PC-9 (cell line): ENCODE measurements at regions of chr2 and their contacts with region 1.

Region 1: DNA sequence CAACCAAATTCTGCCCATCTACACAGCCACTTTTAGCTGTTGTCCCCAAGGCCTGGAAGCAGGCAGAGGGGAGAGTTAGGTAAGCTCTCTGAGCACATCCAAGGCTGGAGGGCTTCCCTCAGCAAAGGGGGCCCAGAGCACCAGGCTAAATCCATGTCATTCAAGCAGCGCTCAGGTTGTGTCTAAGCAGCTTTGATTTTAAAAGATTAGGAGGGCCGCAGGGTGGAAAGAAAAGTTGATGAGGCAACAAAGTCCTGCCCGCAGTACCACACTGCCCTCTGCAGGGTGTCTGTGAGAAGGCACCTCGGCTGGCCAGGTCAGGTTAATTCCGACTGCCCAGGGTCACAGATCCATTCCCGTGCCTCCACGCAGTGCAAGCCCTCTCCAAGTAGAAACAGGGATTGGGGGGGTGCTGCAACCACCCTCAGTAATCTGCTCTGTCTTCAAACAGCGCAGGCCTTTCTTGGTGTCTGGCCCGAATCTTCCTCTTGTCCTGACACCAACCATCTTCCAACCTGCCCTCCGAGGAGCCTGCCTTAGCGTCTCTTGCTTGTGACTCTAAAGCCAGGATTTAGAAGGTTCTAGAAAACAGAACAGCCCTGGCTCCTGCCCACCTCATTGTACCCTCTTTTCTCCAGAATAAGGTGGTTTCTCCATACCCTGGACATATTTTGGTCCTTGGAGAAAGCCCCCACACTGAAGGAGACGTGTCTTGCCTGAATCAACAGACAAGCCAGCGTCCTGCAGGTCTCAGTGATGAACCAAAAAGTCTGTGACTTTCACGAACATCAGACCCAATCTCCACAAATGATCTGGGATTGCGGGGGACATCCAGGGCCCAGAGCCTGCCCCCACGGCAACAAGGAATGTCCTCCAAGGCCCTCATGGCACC is 289.2 kb downstream of the TNS1 start:
- DNase-seq: peak; percentile 36 to 84
- H3K4me3 ChIP-seq: no peak overlapping the region
- H3K27ac ChIP-seq: no peak overlapping the region
- H3K4me1 ChIP-seq: peaks cover 26% of the 10 kb centered on the region
- H3K27me3 ChIP-seq: no peaks in the 10 kb centered on the region
- CTCF ChIP-seq: peak; percentile 95

Region 2: DNA sequence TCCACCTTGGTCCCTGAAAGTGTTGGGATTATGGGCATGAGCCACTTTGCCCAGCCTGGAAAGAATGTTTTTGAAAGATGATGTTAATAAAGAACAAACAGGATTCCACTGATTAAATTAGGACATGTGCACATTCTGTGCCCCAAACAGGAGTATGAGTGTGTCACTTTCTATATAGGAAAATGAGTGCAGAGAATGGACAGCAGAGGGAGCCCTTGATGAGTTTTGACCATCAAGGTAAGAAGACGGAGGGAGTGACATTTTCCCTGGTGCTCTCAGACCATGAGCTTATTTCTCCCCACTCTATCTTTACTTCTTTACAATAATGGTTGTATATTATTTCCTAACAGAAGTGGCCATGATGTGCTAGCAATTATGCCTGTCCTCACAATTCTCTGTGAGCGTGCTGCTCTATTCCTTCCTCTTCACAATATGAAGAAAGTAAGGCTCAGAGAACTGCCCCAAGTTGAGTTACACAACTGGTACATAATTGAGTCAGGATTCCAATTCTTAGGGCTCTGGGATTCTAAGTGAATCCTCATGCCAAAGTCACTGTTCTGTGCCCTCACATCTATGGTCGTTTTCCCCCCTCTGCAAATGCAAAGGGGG is 1194.4 kb before region 1 on chr2:
- CTCF ChIA-PET with region 1: no interaction called
- POLR2A ChIA-PET with region 1: no interaction called
- intact Hi-C with region 1: loop called (anchors 1 kb)
- DNase-seq: peak; percentile 53 to 64
- H3K4me3 ChIP-seq: no peak overlapping the region
- H3K27ac ChIP-seq: no peak overlapping the region
- H3K4me1 ChIP-seq: 0 out of 2 replicates have a peak, but pooled peaks cover 3% of the 10 kb centered on the region
- H3K27me3 ChIP-seq: no peaks in the 10 kb centered on the region
- CTCF ChIP-seq: peak; percentile 86

Region 3: GRCh38 chr2:216681683-216682082 is 1032.0 kb before region 1 on chr2:
- CTCF ChIA-PET with region 1: no interaction called
- POLR2A ChIA-PET with region 1: no interaction called
- intact Hi-C with region 1: loop called (anchors 1 kb)
- DNase-seq: no peak
- H3K4me3 ChIP-seq: no peak overlapping the region
- H3K27ac ChIP-seq: 0 out of 2 replicates have a peak overlapping the region, but pooled peaks have one; percentile 10
- H3K4me1 ChIP-seq: peaks cover 17% of the 10 kb centered on the region
- H3K27me3 ChIP-seq: no peaks in the 10 kb centered on the region
- CTCF ChIP-seq: no peak

Region 4: DNA sequence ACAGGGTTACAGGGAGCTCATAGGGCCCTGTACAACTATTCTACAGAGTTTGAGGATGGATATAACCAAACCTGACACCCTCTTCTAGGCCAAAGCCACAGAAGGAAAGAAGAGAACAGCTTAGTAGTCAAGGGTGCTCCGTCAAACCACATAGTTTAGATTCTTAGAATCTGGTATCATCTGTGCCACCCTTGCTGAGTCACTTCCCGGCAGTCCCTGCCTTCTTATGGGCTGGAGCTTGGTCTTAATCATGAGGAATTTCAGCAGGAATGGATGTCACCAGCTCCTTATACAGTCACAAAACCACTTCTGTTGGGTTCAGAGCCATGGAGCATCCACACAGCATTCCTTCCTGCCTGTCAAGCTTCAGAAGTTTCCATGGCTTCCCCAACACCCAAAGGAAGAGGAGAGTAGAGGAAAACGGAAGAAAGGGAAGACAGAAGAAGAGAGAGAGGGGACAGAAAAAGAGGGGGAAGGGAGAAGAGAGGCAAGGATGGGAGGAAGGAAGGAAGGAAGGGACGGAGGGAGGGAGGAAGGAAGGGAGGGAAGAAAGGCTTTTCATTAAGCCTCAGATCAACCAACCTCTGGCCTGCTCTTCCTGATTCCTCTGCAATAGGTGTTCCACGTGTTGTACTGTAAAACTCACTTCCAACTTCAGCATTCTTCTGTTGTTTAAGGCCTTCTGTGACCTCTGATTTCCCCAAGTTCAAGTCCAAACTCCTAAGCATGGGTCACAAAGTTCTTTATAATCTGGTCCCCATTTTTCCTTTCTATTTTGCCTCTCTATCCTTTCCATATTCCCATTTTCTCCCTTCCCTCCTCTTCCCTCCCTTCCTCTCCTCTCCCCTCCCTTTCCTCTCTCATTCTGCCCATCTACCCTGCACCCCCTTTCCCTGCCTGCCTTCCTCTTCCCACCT is 607.6 kb before region 1 on chr2:
- CTCF ChIA-PET with region 1: interaction called, 10 read pairs
- POLR2A ChIA-PET with region 1: no interaction called
- intact Hi-C with region 1: no loop called
- DNase-seq: peak; percentile 79 to 95
- H3K4me3 ChIP-seq: no peak overlapping the region
- H3K27ac ChIP-seq: peak overlapping the region; percentile 94
- H3K4me1 ChIP-seq: peaks cover 61% of the 10 kb centered on the region
- H3K27me3 ChIP-seq: no peaks in the 10 kb centered on the region
- CTCF ChIP-seq: no peak

Region 5: DNA sequence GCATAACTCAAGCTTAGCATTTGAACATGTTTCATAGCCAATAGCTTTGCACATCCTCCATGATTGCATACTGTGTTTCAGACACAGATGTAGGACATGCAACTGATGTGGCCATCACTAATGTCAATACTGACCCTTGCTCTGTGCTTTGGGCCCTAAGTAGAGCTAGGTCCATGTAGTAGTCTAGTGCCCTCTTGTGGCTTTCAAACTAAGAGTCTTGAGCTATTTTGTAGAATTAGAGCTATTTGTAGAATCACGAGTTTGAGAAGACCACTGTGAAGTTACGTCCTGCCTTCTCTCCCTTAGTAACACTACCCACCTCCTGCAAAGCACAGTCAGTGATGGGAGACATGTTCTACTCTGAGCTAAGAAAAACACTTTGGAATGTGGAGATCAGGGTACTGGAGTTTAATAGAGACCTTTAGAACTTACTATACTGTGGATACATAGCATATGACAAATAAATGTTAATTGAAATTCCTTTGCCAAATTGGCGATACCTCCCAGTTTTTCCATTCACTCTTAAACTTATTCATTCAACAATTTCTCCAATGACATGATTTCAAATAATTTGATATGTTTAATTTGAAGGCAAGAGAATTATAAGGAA is 547.3 kb before region 1 on chr2:
- CTCF ChIA-PET with region 1: interaction called, 11 read pairs
- POLR2A ChIA-PET with region 1: no interaction called
- intact Hi-C with region 1: loop called (anchors 10 kb)
- DNase-seq: peak in 1 of 2 experiments; percentile 4
- H3K4me3 ChIP-seq: no peak overlapping the region
- H3K27ac ChIP-seq: no peak overlapping the region
- H3K4me1 ChIP-seq: peaks cover 14% of the 10 kb centered on the region; the same call in 1 of the 2 replicates
- H3K27me3 ChIP-seq: no peaks in the 10 kb centered on the region
- CTCF ChIP-seq: peak; percentile 67

Region 6: GRCh38 chr2:217370391-217370790 is 343.2 kb before region 1 on chr2:
- CTCF ChIA-PET with region 1: no interaction called
- POLR2A ChIA-PET with region 1: interaction called, 15 read pairs
- intact Hi-C with region 1: loop called (anchors 5 kb)
- DNase-seq: peak; percentile 32 to 79
- H3K4me3 ChIP-seq: no peak overlapping the region
- H3K27ac ChIP-seq: no peak overlapping the region
- H3K4me1 ChIP-seq: peaks cover 53% of the 10 kb centered on the region
- H3K27me3 ChIP-seq: no peaks in the 10 kb centered on the region
- CTCF ChIP-seq: no peak

Region 7: DNA sequence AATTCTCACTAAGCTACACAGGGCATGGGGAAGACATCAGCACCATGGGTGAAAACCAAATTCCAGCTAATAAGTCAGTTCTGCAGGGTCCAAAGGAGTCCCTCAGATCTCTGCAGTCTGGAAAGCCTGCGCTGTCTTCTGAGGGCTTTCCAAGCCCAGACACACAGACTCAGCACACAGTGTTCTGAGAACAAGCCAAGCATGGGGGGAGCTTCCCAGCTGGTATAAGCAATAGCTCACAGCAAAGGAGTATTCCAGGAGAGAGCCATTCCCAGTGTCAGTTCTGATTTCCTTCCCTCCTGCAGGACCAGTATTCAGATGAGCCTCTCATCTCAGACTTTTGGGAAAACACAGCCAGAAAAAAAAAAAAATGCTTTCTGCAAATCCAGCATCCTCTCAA is 81.6 kb before region 1 on chr2:
- CTCF ChIA-PET with region 1: no interaction called
- POLR2A ChIA-PET with region 1: no interaction called
- intact Hi-C with region 1: no loop called
- DNase-seq: no peak
- H3K4me3 ChIP-seq: no peak overlapping the region
- H3K27ac ChIP-seq: no peak overlapping the region
- H3K4me1 ChIP-seq: no peaks in the 10 kb centered on the region
- H3K27me3 ChIP-seq: no peaks in the 10 kb centered on the region
- CTCF ChIP-seq: no peak

Region 8: DNA sequence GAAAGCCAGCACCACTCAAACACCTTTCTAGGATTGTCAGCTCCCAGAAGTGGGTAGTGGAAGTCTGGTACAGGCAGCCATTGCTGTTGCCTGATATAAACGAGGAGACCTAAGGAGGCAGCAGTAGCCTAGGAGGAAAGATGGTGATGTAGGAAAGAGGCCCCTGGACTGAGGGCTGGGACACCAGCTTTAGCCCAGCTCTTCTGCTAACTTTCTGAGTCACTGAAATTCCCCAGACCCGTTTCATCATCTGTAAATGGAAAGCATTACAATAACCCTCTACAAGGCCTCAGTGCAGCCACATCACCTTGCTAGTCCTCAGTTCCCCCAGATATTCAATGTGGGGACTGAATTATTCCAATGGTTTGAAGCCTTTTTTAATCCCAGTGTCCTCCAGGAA is 47.3 kb before region 1 on chr2:
- CTCF ChIA-PET with region 1: no interaction called
- POLR2A ChIA-PET with region 1: no interaction called
- intact Hi-C with region 1: no loop called
- DNase-seq: no peak
- H3K4me3 ChIP-seq: no peak overlapping the region
- H3K27ac ChIP-seq: no peak overlapping the region
- H3K4me1 ChIP-seq: peaks cover 10% of the 10 kb centered on the region; the same call in 1 of the 2 replicates
- H3K27me3 ChIP-seq: no peaks in the 10 kb centered on the region
- CTCF ChIP-seq: no peak

Region 9: GRCh38 chr2:217685255-217685605 is 28.4 kb before region 1 on chr2:
- CTCF ChIA-PET with region 1: no interaction called
- POLR2A ChIA-PET with region 1: no interaction called
- intact Hi-C with region 1: no loop called
- DNase-seq: peak; percentile 80 to 97
- H3K4me3 ChIP-seq: no peak overlapping the region
- H3K27ac ChIP-seq: peak overlapping the region; percentile 74
- H3K4me1 ChIP-seq: peaks cover 27% of the 10 kb centered on the region
- H3K27me3 ChIP-seq: no peaks in the 10 kb centered on the region
- CTCF ChIP-seq: no peak